ENCODE measurements at regions of chr2 and their contacts with region 1.

Region 1: DNA sequence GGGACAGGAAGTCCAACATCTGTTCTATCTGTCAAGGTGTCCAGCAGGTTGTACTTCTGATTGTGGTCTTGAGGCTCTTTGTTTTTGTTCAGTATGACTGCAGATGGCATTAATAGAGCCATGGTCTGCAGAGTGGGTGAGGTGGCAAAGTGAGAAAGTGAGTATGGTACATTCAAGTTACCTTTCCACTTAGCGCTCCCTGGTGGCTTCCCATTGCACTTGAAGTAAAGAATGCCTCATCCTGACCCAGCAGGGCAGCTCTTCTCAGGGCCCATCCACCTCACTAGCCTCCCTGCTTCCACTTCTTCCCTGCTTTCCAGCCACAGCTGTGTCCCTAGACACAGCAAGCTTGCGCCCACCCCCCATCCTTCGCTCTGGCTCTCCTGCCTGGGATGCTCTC is 148.0 kb upstream of the ALPP start:
- DNase-seq: peak; percentile 62
- H3K4me3 Mint-ChIP-seq: no peak overlapping the region
- H3K27ac Mint-ChIP-seq: no peak overlapping the region
- H3K4me1 Mint-ChIP-seq: peaks cover 17% of the 10 kb centered on the region
- H3K27me3 Mint-ChIP-seq: no peaks in the 10 kb centered on the region

Region 2: GRCh38 chr2:232113821-232114220 is 116.7 kb before region 1 on chr2:
- intact Hi-C with region 1: no loop called
- DNase-seq: no peak
- H3K4me3 Mint-ChIP-seq: no peak overlapping the region
- H3K27ac Mint-ChIP-seq: no peak overlapping the region
- H3K4me1 Mint-ChIP-seq: peaks cover 11% of the 10 kb centered on the region
- H3K27me3 Mint-ChIP-seq: no peaks in the 10 kb centered on the region

Region 3: DNA sequence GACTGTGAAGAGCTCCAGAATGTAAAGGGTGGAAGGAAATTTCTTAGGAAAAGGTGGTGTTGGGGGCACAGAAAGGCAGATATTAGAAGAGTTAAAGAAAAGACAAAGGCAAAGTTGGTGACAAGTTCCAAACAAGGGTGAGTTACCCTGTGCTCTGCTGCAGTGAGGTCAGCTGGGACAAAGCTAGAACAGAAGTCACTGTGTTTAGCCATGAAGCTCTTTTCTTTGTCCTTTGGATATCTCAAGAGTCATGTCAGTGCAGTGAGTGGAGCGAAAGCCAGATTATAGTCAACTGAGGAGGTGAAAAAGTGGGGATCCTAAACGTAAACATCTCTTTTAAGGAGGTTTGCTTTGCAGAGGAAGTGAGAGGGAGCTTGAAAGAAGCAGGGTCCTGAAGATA is 39.8 kb before region 1 on chr2:
- intact Hi-C with region 1: loop called (anchors 1 kb)
- DNase-seq: peak; percentile 20
- H3K4me3 Mint-ChIP-seq: no peak overlapping the region
- H3K27ac Mint-ChIP-seq: no peak overlapping the region
- H3K4me1 Mint-ChIP-seq: no peaks in the 10 kb centered on the region
- H3K27me3 Mint-ChIP-seq: no peaks in the 10 kb centered on the region

Region 4: GRCh38 chr2:232204457-232204931 is 26.1 kb before region 1 on chr2:
- intact Hi-C with region 1: no loop called
- DNase-seq: no peak
- H3K4me3 Mint-ChIP-seq: no peak overlapping the region
- H3K27ac Mint-ChIP-seq: no peak overlapping the region
- H3K4me1 Mint-ChIP-seq: peaks cover 4% of the 10 kb centered on the region
- H3K27me3 Mint-ChIP-seq: no peaks in the 10 kb centered on the region

Region 5: DNA sequence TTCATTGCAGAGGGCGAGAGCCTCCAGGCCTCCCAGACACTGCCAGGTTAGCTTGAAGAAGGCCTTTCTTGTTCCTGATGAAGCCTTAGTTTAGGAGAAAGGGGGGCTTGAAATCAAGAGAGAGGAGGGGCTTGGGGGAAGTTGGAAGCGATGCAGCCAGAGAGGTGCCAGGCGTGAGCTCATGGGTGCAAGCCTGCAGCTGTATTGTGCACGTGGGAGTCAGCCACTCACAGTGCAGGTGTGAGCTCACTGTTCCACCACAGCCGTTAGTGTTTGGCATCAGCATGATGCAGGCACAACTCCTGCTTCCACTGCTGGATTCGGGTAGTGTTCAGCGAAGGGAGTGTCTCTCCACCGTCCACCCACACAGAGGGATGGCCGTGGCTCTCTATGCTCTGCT is 79.6 kb after region 1 on chr2:
- intact Hi-C with region 1: loop called (anchors 5 kb)
- DNase-seq: peak; percentile 71
- H3K4me3 Mint-ChIP-seq: peak overlapping the region; percentile 59
- H3K27ac Mint-ChIP-seq: peak overlapping the region; percentile 47
- H3K4me1 Mint-ChIP-seq: peaks cover 38% of the 10 kb centered on the region
- H3K27me3 Mint-ChIP-seq: no peaks in the 10 kb centered on the region

Region 6: DNA sequence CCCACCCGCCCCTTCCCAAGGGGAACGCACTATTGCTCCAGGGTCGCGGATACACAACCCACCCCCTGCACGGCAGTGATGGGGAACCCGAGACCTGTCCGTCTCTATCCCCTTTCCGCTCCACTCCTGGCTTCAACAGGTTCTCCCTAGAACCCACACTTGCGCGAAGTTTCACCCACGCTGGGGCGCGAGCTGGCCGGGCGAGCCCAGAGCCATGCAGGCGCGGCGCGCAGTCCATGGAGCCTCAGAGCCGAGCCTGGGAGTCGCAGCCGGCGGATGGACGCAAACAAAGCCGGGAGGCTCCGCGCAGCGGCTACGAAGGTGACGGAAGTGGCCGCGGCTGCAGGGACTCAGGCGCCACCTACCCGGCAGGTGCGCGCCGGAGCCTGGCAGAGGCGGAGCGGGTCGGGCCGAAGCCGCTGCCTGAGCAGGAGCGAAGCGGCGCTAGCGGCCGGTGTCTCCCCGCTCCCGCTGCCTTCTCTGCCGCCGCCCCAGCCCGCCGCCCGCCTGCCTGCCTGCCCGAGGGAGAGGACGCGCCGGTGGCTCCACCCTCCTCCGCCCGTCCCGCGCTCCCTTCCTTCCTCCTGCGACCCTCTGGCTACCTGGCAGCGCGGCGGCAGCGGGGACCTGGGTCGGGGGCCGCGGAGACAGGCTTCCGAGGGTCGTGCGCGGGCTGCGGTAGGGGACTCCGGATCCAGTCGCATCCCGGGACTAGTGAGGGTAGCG is 190.1 kb after region 1 on chr2:
- intact Hi-C with region 1: no loop called
- DNase-seq: peak; percentile 82
- H3K4me3 Mint-ChIP-seq: peak overlapping the region; percentile 45
- H3K27ac Mint-ChIP-seq: no peak overlapping the region
- H3K4me1 Mint-ChIP-seq: peaks cover 3% of the 10 kb centered on the region
- H3K27me3 Mint-ChIP-seq: peaks cover 59% of the 10 kb centered on the region

Region 7: DNA sequence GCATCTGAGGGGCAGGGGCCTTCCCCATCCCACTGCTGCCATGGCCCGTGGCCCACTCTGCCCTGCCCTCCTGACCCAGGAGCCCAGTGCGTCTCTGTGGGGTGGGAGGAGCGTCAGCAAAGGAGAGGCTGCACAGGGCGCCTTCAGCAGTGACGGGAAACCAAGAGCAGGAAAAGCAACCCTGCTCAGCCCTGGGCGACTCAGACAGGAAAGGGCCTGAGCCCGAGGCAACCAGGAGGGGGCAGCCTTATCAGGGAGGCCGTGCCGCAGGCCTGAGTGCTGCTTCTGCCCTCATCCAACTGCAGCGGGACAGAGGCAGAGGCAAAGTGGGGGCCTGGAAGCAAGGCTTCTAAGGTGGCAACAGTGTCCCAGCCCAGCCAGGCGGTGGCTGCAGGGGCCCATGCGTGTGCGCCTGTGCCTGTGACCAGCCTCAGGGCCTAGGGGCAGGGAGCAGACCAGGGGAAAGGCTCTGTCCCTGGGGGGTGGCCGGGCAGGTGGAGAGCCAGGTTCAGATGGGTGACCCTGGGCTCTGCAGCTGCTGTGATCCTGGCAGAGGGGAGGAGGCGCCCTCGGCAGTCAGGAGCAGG is 202.1 kb after region 1 on chr2:
- intact Hi-C with region 1: no loop called
- DNase-seq: no peak
- H3K4me3 Mint-ChIP-seq: no peak overlapping the region
- H3K27ac Mint-ChIP-seq: no peak overlapping the region
- H3K4me1 Mint-ChIP-seq: no peaks in the 10 kb centered on the region
- H3K27me3 Mint-ChIP-seq: peaks cover 4% of the 10 kb centered on the region